Panc1 (cell line): ENCODE measurements at regions of chr1 and their contacts with region 1.

Region 1: DNA sequence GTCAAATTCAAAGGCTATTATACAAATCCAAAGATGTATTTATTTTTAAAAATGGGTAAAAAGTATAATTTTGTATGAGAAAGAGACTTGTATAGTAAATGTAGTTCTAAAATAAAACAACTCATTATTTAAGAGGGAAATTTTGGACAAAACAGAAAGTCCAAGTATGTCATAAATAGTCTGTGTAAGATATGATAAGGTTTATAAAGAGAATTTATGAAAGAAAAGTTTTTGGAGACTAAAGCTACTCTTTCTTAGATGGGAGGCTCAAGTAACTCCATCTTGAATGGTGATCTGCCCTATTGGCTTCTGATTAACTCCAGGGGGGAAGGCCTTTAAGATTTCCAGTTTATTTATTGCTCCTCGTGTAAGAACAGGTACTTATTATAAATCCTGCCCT is 14.7 kb upstream of the OR2T27 start:
- DNase-seq: no peak
- ATAC-seq: no peak
- H3K4me3 ChIP-seq: no peak overlapping the region
- H3K27ac ChIP-seq: no peak overlapping the region
- H3K4me1 ChIP-seq: no peaks in the 10 kb centered on the region
- H3K27me3 ChIP-seq: no peaks in the 10 kb centered on the region
- CTCF ChIP-seq: no peak

Region 2: GRCh38 chr1:248681651-248682050 is 11.6 kb after region 1 on chr1:
- CTCF ChIA-PET with region 1: no interaction called
- POLR2A ChIA-PET with region 1: no interaction called
- in situ Hi-C with region 1: no loop called
- intact Hi-C with region 1: no loop called
- DNase-seq: no peak
- ATAC-seq: no peak
- H3K4me3 ChIP-seq: no peak overlapping the region
- H3K27ac ChIP-seq: no peak overlapping the region
- H3K4me1 ChIP-seq: no peaks in the 10 kb centered on the region
- H3K27me3 ChIP-seq: no peaks in the 10 kb centered on the region
- CTCF ChIP-seq: no peak

Region 3: GRCh38 chr1:248837794-248838356 is 167.9 kb after region 1 on chr1 and contains the start of gene ZNF672:
- CTCF ChIA-PET with region 1: no interaction called
- POLR2A ChIA-PET with region 1: no interaction called
- in situ Hi-C with region 1: no loop called
- intact Hi-C with region 1: no loop called
- DNase-seq: peak; percentile 88
- ATAC-seq: peak; percentile 94
- H3K4me3 ChIP-seq: peak within 1 kb of the TSS; percentile 80 to 95
- H3K27ac ChIP-seq: peak within 1 kb of the TSS; percentile 91
- H3K4me1 ChIP-seq: peaks cover 4% of the 10 kb centered on the region; the same call in 1 of the 2 replicates
- H3K27me3 ChIP-seq: peaks cover 2% of the 10 kb centered on the region; the same call in 1 of the 2 replicates
- CTCF ChIP-seq: no peak
- total RNA-seq, gene ZNF672: 36.2 TPM

Region 4: GRCh38 chr1:248906009-248906752 is 236.2 kb after region 1 on chr1 and contains the start of gene PGBD2:
- CTCF ChIA-PET with region 1: interaction called, 14 read pairs
- POLR2A ChIA-PET with region 1: no interaction called
- in situ Hi-C with region 1: no loop called
- intact Hi-C with region 1: no loop called
- DNase-seq: peak; percentile 64
- ATAC-seq: peak; percentile 98
- H3K4me3 ChIP-seq: peak within 1 kb of the TSS; percentile 67 to 91
- H3K27ac ChIP-seq: peak within 1 kb of the TSS; percentile 88
- H3K4me1 ChIP-seq: peaks cover 6% of the 10 kb centered on the region
- H3K27me3 ChIP-seq: no peaks in the 10 kb centered on the region; the same call in 1 of the 2 replicates
- CTCF ChIP-seq: peak; percentile 86
- total RNA-seq, gene PGBD2: 7.1 TPM